H1 (cell line): ENCODE measurements at regions of chr9 and their contacts with region 1.

Region 1: DNA sequence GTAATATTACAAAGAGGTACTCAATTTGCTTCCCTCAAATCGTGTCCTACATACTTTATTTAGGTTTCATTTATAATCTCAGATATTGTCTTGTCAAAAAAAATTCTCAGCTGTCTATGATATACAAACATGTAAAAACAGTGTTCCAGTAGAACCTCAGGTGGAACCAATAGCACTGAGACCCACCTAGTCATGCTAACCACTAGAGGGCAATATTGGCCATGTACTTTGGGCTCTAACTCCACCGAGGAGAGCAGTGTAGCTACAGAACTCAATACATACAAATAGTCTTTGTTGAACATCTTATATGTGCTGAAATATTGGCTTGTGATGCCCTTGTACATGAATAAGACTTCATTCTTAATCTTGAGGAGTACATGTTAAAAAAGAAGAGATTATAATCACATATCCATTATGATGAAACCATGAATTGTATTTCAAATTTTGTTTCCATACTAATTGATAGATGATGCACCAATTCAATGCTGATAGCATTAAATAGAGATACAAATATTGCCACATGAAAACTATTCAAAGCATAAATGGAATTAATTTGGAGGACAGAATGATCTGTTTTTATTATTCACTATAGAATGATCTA is 71.2 kb upstream of the CNTLN start:
- DNase-seq: no peak
- H3K4me3 ChIP-seq: no peak overlapping the region
- H3K27ac ChIP-seq: no peak overlapping the region
- H3K4me1 ChIP-seq: no peaks in the 10 kb centered on the region
- H3K27me3 ChIP-seq: no peaks in the 10 kb centered on the region
- CTCF ChIP-seq: peak; percentile 42 to 89 (median 82)
- EP300 ChIP-seq: no peak
- POLR2A ChIP-seq: no peak
- RAD21 ChIP-seq: peak; percentile 93 to 95

Region 2: GRCh38 chr9:17052626-17053025 is 11.0 kb before region 1 on chr9:
- CTCF ChIA-PET with region 1: interaction called, 27 read pairs
- POLR2A ChIA-PET with region 1: no interaction called
- DNase-seq: no peak
- H3K4me3 ChIP-seq: no peak overlapping the region
- H3K27ac ChIP-seq: no peak overlapping the region
- H3K4me1 ChIP-seq: no peaks in the 10 kb centered on the region
- H3K27me3 ChIP-seq: no peaks in the 10 kb centered on the region
- CTCF ChIP-seq: no peak
- EP300 ChIP-seq: no peak
- POLR2A ChIP-seq: no peak
- RAD21 ChIP-seq: no peak

Region 3: GRCh38 chr9:17075146-17075757 is 11.6 kb after region 1 on chr9:
- CTCF ChIA-PET with region 1: interaction called, 20 read pairs
- POLR2A ChIA-PET with region 1: no interaction called
- DNase-seq: no peak
- H3K4me3 ChIP-seq: no peak overlapping the region
- H3K27ac ChIP-seq: no peak overlapping the region
- H3K4me1 ChIP-seq: no peaks in the 10 kb centered on the region
- H3K27me3 ChIP-seq: no peaks in the 10 kb centered on the region
- CTCF ChIP-seq: no peak
- EP300 ChIP-seq: no peak
- POLR2A ChIP-seq: no peak
- RAD21 ChIP-seq: no peak

Region 4: DNA sequence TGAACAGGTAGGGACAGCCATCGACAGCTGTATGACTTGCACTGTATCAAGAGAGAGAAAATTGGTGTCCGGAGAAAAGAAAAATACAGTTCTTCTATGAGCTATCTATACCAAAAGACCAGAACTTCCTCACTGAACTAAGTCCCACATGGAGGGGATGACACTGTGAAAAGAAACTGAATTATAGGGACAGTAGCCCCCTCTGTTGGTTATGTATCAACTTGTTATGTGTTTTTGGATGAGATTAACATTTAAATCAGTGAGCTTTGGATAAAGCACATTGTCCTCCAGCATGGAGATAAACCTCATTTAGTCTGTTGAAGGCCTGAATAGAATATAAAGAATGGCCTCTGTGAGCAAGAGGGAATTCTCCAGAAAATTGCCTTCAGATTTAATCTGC is 338.7 kb after region 1 on chr9:
- CTCF ChIA-PET with region 1: interaction called, 31 read pairs
- POLR2A ChIA-PET with region 1: no interaction called
- DNase-seq: no peak
- H3K4me3 ChIP-seq: no peak overlapping the region
- H3K27ac ChIP-seq: no peak overlapping the region
- H3K4me1 ChIP-seq: peaks cover 0 to 9% (median 3%) of the 10 kb centered on the region in 4 experiments; a peak in 4 of 7 replicates
- H3K27me3 ChIP-seq: no peaks in the 10 kb centered on the region
- CTCF ChIP-seq: peak in 2 of 3 experiments; percentile 36 to 55; a peak in 2 of 4 replicates
- EP300 ChIP-seq: no peak
- POLR2A ChIP-seq: no peak
- RAD21 ChIP-seq: peak; percentile 78 to 80

Region 5: DNA sequence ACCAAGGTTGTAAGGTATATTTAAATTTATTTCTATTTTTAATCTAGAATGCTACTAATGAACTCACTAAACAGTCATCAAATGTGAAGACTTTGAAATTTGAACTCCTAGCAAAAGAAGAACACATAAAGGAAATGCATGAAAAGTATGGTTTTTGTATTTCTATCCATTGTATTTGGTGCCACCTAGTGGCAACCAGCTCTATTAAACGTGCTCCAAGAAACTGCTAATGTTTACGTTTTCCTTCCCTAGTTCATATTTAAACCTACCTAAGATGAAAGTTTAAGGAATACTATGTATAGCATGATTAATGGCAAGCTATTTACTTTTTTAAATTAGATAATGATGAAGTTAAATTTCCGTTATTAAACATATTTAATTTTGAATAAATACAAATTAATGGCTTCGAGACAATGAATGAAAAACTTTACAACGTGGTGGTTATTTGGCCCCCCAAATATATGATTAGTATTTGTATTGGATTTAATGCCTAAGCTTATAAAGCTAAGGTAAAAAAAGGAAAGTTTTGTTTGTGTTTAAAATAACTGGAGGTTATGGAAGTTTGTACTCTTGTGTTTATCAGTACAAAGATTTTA is 399.3 kb after region 1 on chr9:
- CTCF ChIA-PET with region 1: interaction called, 12 read pairs
- POLR2A ChIA-PET with region 1: no interaction called
- DNase-seq: no peak
- H3K4me3 ChIP-seq: no peak overlapping the region
- H3K27ac ChIP-seq: no peak overlapping the region
- H3K4me1 ChIP-seq: no peaks in the 10 kb centered on the region
- H3K27me3 ChIP-seq: no peaks in the 10 kb centered on the region
- CTCF ChIP-seq: peak in 2 of 3 experiments; percentile 38 to 67; a peak in 2 of 4 replicates
- EP300 ChIP-seq: no peak
- POLR2A ChIP-seq: no peak
- RAD21 ChIP-seq: peak; percentile 84